ENCODE measurements at regions of chr1 and their contacts with region 1.

Region 1: GRCh38 chr1:180168786-180169639 is 14.3 kb downstream of the QSOX1 start:
- DNase-seq: no peak
- ATAC-seq: peak; percentile 71
- H3K4me3 ChIP-seq: no peak overlapping the region
- H3K27ac ChIP-seq: peak overlapping the region; percentile 70
- H3K4me1 ChIP-seq: peaks cover 29 to 46% of the 10 kb centered on the region in 2 experiments
- H3K27me3 ChIP-seq: no peaks in the 10 kb centered on the region
- CTCF ChIP-seq: peak; percentile 28 to 88 (median 71); a peak in 5 of 6 replicates
- POLR2A ChIP-seq: no peak
- RAD21 ChIP-seq: peak; percentile 64

Region 2: GRCh38 chr1:179867807-179868330 is 301.1 kb before region 1 on chr1:
- CTCF ChIA-PET with region 1: interaction called, 14 read pairs
- POLR2A ChIA-PET with region 1: interaction called, 3 read pairs
- RAD21 ChIA-PET with region 1: no interaction called
- intact Hi-C with region 1: loop called (anchors 1 kb)
- DNase-seq: no peak
- ATAC-seq: peak; percentile 93
- H3K4me3 ChIP-seq: no peak overlapping the region
- H3K27ac ChIP-seq: no peak overlapping the region
- H3K4me1 ChIP-seq: no peaks in the 10 kb centered on the region
- H3K27me3 ChIP-seq: no peaks in the 10 kb centered on the region
- CTCF ChIP-seq: peak; percentile 73 to 87 (median 84)
- POLR2A ChIP-seq: no peak
- RAD21 ChIP-seq: peak; percentile 69

Region 3: GRCh38 chr1:179954493-179955297 is 214.3 kb before region 1 on chr1 and contains the start of gene CEP350:
- CTCF ChIA-PET with region 1: no interaction called
- POLR2A ChIA-PET with region 1: no interaction called
- RAD21 ChIA-PET with region 1: no interaction called
- intact Hi-C with region 1: loop called (anchors 5 kb)
- DNase-seq: peak; percentile 98
- ATAC-seq: peak; percentile 98
- H3K4me3 ChIP-seq: peak within 1 kb of the TSS; percentile 53 to 89
- H3K27ac ChIP-seq: peak within 1 kb of the TSS; percentile 79
- H3K4me1 ChIP-seq: peaks cover 8 to 20% of the 10 kb centered on the region in 2 experiments; a peak in 3 of 4 replicates
- H3K27me3 ChIP-seq: no peaks in the 10 kb centered on the region
- CTCF ChIP-seq: no peak
- POLR2A ChIP-seq: peak; percentile 11
- RAD21 ChIP-seq: no peak
- total RNA-seq, gene CEP350: 27.6 TPM

Region 4: DNA sequence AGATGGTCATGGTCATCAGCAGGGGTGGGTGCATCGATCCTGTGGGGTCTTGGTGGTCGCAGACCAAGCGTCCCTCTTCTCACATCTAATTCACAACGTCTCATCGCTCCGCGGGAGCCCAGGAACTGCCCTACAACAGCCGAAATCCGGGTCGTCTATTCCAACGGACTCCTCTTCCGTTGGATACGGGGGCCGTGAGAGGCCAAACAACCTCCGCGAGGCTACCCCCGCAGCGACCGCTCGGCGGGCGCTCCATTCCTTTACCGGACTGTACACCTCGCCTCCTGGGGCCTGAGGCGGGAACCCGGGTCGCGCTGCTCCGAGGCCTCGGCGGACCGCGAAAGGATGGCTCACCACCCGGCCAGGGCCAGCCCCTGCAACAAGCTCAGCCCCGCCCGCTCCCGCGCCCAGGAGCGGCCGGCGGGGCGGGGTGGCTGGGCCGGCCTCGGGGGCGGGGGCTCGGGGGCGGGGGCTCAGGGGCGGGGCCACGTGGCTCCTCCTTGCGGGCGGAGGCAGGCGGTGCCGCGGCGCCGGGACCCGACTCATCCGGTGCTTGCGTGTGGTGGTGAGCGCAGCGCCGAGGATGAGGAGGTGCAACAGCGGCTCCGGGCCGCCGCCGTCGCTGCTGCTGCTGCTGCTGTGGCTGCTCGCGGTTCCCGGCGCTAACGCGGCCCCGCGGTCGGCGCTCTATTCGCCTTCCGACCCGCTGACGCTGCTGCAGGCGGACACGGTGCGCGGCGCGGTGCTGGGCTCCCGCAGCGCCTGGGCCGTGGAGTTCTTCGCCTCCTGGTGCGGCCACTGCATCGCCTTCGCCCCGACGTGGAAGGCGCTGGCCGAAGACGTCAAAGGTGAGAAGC is 14.5 kb before region 1 on chr1 and contains the start of gene QSOX1:
- CTCF ChIA-PET with region 1: interaction called, 6 read pairs
- POLR2A ChIA-PET with region 1: interaction called, 11 read pairs
- RAD21 ChIA-PET with region 1: no interaction called
- intact Hi-C with region 1: no loop called
- DNase-seq: peak; percentile 61
- ATAC-seq: peak; percentile 91
- H3K4me3 ChIP-seq: peak within 1 kb of the TSS; percentile 81 to 91
- H3K27ac ChIP-seq: peak within 1 kb of the TSS; percentile 78
- H3K4me1 ChIP-seq: peaks cover 2 to 43% of the 10 kb centered on the region in 2 experiments; a peak in 3 of 4 replicates
- H3K27me3 ChIP-seq: no peaks in the 10 kb centered on the region
- CTCF ChIP-seq: no peak
- POLR2A ChIP-seq: peak; percentile 69
- RAD21 ChIP-seq: 0 out of 2 replicates have a peak, but pooled peaks have one; percentile 17
- total RNA-seq, gene QSOX1: 89.2 TPM